ENCODE measurements at regions of chr5 and their contacts with region 1.

Region 1: GRCh38 chr5:154949781-154950180 is 8.9 kb downstream of the MRPL22 start:
- DNase-seq: no peak
- ATAC-seq: no peak
- H3K4me3 ChIP-seq: no peak overlapping the region
- H3K27ac ChIP-seq: no peak overlapping the region
- H3K4me1 ChIP-seq: no peaks in the 10 kb centered on the region
- H3K27me3 ChIP-seq: no peaks in the 10 kb centered on the region
- CTCF ChIP-seq: no peak
- POLR2A ChIP-seq: no peak
- RAD21 ChIP-seq: no peak

Region 2: GRCh38 chr5:154683101-154683880 is 266.5 kb before region 1 on chr5:
- CTCF ChIA-PET with region 1: no interaction called
- POLR2A ChIA-PET with region 1: interaction called, 10 read pairs
- dilution Hi-C with region 1: no loop called
- in situ Hi-C with region 1: no loop called
- intact Hi-C with region 1: no loop called
- DNase-seq: no peak
- ATAC-seq: peak; percentile 9; the same call in 1 of the 2 replicates
- H3K4me3 ChIP-seq: peak overlapping the region; percentile 55
- H3K27ac ChIP-seq: no peak overlapping the region
- H3K4me1 ChIP-seq: no peaks in the 10 kb centered on the region
- H3K27me3 ChIP-seq: no peaks in the 10 kb centered on the region
- CTCF ChIP-seq: no peak
- POLR2A ChIP-seq: no peak
- RAD21 ChIP-seq: no peak

Region 3: DNA sequence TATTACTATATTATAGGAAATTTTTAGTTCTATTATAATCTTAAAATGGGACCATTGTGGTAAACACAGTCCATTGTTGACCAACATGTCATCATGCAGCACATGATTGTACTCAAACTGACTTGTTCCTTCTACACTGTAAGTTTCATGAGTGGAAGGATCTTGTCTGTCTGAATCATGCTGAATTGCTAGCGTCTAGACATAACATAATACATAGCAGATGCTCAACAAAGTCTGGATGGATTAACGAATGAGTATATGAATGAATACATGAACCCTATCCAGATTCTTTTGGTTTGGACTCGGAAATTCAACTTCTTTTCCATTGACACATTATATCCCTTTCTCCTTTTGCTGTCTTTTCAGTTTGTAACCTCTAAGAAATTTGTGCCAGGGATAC is 948.0 kb after region 1 on chr5:
- CTCF ChIA-PET with region 1: no interaction called
- POLR2A ChIA-PET with region 1: no interaction called
- dilution Hi-C with region 1: no loop called
- in situ Hi-C with region 1: no loop called
- intact Hi-C with region 1: loop called (anchors 5 kb)
- DNase-seq: no peak
- ATAC-seq: no peak
- H3K4me3 ChIP-seq: no peak overlapping the region
- H3K27ac ChIP-seq: no peak overlapping the region
- H3K4me1 ChIP-seq: peaks cover 2% of the 10 kb centered on the region; the same call in 1 of the 2 replicates
- H3K27me3 ChIP-seq: no peaks in the 10 kb centered on the region
- CTCF ChIP-seq: no peak
- POLR2A ChIP-seq: no peak
- RAD21 ChIP-seq: no peak